Mammary epithelial cell (primary cell): ENCODE measurements at regions of chr22 and their contacts with region 1.

Region 1: DNA sequence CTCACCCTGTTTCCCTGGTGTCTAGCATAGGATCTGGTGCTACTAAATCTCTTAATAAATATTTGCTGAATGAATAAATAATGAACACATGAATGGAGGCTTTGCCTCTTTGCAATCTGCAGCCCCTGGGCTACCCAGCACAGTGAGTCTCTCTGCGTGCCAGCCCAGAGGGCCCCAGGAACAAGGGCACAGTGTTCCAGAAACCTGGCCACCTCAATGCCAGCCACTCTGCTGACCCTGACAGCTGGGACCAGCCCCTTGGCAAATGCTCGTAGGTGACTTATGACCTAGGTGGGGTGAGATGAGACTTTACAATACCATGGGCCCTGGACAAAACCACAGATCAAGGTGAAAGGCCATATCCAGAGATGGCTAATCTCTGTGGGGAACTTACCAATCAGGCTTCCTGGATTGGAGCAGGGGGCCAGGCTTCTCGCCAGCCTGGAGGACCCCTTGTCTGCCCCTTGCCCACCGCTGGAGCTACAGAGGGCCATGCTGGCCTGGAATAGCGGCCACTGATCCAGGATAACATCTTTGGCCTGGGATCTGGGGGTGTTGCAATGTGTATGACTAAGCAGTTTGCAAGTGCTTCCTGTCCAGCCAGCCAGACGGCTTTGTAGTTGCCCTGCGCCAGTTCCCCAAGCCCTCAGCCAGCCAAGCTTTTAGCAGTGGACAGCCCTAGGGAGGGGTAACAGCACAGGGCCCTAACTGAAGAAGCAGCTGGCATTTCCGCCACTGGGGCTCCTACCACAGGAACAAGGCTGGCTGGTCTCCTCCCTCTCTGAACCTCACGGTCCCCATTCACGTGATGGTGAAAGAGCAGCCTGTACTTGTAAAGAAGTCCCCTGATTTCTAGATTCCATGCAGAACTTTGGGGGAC is 31.9 kb downstream of the UQCR10 start:
- DNase-seq: peak; percentile 87
- H3K4me3 ChIP-seq: no peak overlapping the region
- H3K27ac ChIP-seq: peak overlapping the region; percentile 33
- H3K4me1 ChIP-seq: peaks cover 21% of the 10 kb centered on the region
- H3K27me3 ChIP-seq: no peaks in the 10 kb centered on the region
- CTCF ChIP-seq: peak in 1 of 2 donors; percentile 11

Region 2: DNA sequence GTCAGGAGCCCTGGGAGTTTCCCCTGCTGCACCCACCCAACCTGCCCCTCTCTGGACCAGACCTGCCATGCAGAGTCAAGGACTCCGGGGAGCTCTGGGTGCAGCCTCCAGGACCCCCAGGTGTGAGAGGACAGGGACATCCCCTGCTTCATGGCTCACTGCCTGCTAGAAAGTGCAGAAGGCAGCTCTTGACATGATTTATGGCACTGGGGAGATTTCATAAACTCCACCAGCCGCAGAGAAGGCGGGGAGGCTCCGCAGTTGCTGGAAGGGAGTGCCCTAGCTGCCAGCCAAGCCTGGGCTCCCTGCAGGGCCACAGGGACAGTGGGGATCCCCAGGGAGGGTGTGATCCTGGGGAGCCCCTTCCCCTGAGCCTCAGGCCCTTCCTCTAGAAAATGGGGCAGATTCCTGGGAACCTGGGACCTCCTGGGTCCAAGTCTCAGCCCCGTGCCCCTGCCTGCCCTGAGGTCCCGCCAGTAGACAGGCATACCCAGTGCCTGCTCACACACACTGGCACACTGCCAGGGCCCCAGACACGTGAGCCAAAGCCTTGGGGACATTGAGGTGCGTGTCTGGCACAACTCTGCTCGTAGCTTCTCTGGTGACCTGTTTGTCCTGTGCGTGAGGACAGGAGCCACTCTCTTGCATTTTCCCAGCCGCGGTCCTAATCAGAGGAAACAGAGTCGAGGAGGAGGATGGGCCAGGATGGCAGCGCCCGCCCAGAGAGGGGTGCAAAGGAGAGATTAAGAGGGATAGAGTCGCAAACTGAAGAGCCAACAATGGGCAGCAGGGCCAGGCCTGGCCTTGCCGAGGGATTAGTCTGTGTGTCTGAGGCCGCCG is 65.5 kb before region 1 on chr22:
- CTCF ChIA-PET with region 1: no interaction called
- dilution Hi-C with region 1: no loop called
- in situ Hi-C with region 1: no loop called
- intact Hi-C with region 1: no loop called
- DNase-seq: no peak
- H3K4me3 ChIP-seq: no peak overlapping the region
- H3K27ac ChIP-seq: no peak overlapping the region
- H3K4me1 ChIP-seq: no peaks in the 10 kb centered on the region
- H3K27me3 ChIP-seq: no peaks in the 10 kb centered on the region
- CTCF ChIP-seq: no peak

Region 3: DNA sequence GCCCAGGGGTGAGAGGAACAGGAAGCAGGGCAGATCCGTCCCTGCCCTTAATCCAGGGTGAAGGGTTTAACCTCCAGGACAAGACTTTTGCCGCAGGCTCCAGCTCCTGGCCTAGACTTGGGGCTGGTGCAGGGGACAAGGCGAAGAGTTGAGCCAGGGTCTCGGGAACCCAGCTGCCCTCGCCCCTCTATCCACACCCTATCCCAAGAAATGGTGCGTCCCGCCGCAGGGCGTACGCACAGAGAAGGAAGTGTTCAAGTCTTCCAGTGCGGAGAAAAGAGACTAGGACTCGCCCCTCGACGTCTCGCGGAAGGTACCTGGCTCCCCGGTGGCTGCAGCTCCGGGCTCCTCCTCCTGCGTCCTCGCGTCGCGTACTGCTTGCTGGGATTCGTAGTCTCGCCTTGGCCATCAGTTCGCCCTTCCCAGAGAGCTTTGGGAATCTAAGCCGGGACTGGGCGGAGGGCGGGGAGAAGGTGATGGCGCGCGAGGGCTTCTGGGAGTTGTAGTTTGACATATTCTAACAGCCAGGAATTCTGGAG is 32.3 kb before region 1 on chr22 and contains the start of gene ZMAT5:
- CTCF ChIA-PET with region 1: no interaction called
- dilution Hi-C with region 1: no loop called
- in situ Hi-C with region 1: no loop called
- intact Hi-C with region 1: loop called (anchors 2 kb)
- DNase-seq: peak; percentile 97
- H3K4me3 ChIP-seq: peak within 1 kb of the TSS; percentile 72 to 97 (median 80)
- H3K27ac ChIP-seq: peak within 1 kb of the TSS; percentile 82
- H3K4me1 ChIP-seq: peaks cover 12% of the 10 kb centered on the region
- H3K27me3 ChIP-seq: no peaks in the 10 kb centered on the region
- CTCF ChIP-seq: no peak
- total RNA-seq, gene ZMAT5: 15.3 to 15.5 TPM

Region 4: DNA sequence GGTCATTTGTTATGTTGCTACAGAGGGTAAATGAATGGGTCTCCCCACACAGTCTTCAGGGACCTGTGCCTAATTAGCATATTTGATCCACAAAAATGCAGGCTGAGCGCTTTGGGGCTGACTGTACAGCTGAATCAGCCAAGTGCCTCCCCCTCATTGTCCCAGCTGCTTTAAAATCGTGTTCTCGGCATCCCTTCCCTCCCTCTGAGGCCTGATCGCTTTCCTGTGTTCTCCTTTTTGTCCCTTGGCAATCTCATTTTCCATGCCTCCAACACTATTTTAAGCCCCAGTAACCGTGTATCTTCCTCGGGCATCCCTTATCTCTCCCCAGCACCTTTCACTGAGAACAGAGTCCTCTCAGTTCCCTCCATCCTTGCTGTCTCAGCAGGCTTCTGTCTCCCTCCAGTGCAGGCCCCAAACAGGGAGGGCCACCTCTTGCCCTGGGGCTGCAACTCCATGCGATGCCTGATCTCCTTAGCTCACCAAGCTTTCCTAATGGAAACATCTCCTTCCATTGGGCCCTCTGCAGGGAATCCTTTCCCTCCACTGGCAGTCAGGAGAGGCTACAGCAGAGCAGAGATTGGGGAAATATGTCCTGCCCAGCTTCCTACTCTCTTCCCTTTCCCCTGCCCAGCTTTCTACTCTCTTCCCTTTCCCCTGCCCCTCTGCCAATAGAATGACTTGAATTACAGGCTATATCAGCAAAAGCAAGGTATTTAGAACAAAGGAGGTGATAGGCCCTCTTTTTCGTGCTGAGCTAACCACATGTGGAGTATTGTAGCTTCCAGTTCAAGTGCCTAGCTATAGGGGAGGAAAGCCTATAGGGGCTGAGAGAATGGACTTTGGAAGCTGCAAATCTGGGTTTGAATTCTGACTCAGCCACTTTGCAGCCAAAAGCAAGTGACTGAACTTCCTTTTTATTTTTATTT is 18.0 kb before region 1 on chr22:
- CTCF ChIA-PET with region 1: no interaction called
- dilution Hi-C with region 1: no loop called
- in situ Hi-C with region 1: no loop called
- intact Hi-C with region 1: loop called (anchors 2 kb)
- DNase-seq: peak; percentile 76
- H3K4me3 ChIP-seq: no peak overlapping the region
- H3K27ac ChIP-seq: peak overlapping the region; percentile 57
- H3K4me1 ChIP-seq: peaks cover 42% of the 10 kb centered on the region
- H3K27me3 ChIP-seq: no peaks in the 10 kb centered on the region
- CTCF ChIP-seq: no peak

Region 5: DNA sequence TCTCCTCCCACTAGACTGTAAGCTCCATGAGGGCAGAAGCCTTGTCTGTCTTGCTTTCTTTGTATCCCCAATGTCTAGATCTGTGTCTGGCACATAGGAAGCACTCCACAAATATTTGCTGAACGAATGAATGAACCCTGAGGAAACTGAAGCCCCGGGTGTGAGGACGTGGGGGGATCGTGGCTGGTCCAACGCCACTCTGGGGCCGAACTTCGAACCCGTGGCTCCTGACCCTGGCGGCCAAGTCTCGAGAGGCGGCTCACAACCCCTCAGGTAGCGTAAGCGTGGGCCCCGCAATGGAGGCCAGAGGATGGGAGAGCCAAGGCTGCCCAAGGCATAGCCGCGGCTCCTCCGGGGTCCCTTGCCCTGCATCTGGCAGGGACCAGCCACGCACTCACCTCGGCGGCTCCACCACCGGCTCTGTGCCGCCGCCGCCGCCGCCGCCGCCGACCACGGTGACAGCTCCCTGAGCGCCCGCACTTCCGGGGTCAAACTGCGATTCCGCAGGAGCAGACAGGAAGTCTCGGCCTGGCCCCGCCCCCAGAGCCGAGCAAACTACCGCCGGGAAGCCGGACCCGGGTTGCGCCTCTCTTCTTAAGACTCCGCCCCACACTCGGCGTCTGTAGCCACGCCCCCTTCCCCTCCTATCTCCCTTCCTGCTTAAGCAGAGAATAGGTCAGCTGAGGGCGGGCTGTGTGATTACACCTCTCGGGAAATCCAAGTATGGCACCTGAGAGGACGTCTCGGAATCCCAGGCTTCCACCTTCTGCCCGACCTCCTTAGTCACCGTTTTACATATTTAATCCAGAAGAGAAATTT is 38.9 kb after region 1 on chr22 and contains the start of gene ASCC2:
- CTCF ChIA-PET with region 1: no interaction called
- dilution Hi-C with region 1: no loop called
- in situ Hi-C with region 1: no loop called
- intact Hi-C with region 1: no loop called
- DNase-seq: peak; percentile 98
- H3K4me3 ChIP-seq: peak within 1 kb of the TSS; percentile 86 to 96 (median 91)
- H3K27ac ChIP-seq: peak within 1 kb of the TSS; percentile 67
- H3K4me1 ChIP-seq: peaks cover 24% of the 10 kb centered on the region
- H3K27me3 ChIP-seq: no peaks in the 10 kb centered on the region
- CTCF ChIP-seq: no peak
- total RNA-seq, gene ASCC2: 41.3 to 72.2 TPM

Region 6: DNA sequence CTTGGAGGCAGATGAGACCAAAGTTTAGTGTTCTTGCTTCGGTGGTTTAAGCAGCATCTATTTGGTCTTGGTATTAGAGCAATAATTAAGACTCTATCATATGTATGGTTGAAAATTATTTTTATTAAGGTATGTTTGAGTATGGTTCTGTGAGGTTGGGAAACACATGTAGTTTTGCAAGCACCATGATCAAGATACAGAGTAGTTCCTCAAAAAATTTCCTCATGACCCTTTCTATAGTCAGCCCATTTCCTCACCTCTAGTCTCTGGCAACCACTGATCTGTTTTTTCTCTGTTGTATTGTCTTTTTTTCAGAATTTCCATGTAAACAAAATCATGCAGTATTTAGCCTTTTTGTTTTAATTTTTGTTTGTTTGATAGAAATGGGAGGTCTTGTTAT is 102.3 kb after region 1 on chr22:
- CTCF ChIA-PET with region 1: no interaction called
- dilution Hi-C with region 1: no loop called
- in situ Hi-C with region 1: no loop called
- intact Hi-C with region 1: no loop called
- DNase-seq: no peak
- H3K4me3 ChIP-seq: no peak overlapping the region
- H3K27ac ChIP-seq: no peak overlapping the region
- H3K4me1 ChIP-seq: no peaks in the 10 kb centered on the region
- H3K27me3 ChIP-seq: no peaks in the 10 kb centered on the region
- CTCF ChIP-seq: no peak